AG04450 (cell line): ENCODE measurements at regions of chr11 and their contacts with region 1.

Region 1: GRCh38 chr11:111283945-111284481 is 14.3 kb upstream of the POU2AF3 start:
- DNase-seq: peak; percentile 27
- H3K4me3 ChIP-seq: no peak overlapping the region
- H3K27ac ChIP-seq: no peak overlapping the region
- H3K27me3 ChIP-seq: peaks cover 15% of the 10 kb centered on the region
- CTCF ChIP-seq: no peak

Region 2: GRCh38 chr11:110463153-110463552 is 820.9 kb before region 1 on chr11:
- CTCF ChIA-PET with region 1: interaction called, 11 read pairs
- POLR2A ChIA-PET with region 1: no interaction called
- DNase-seq: peak; percentile 24
- H3K4me3 ChIP-seq: no peak overlapping the region
- H3K27ac ChIP-seq: no peak overlapping the region
- H3K27me3 ChIP-seq: no peaks in the 10 kb centered on the region
- CTCF ChIP-seq: peak; percentile 66

Region 3: GRCh38 chr11:111177037-111177871 is 106.8 kb before region 1 on chr11:
- CTCF ChIA-PET with region 1: no interaction called
- POLR2A ChIA-PET with region 1: no interaction called
- DNase-seq: no peak
- H3K4me3 ChIP-seq: no peak overlapping the region
- H3K27ac ChIP-seq: no peak overlapping the region
- H3K27me3 ChIP-seq: no peaks in the 10 kb centered on the region
- CTCF ChIP-seq: no peak

Region 4: DNA sequence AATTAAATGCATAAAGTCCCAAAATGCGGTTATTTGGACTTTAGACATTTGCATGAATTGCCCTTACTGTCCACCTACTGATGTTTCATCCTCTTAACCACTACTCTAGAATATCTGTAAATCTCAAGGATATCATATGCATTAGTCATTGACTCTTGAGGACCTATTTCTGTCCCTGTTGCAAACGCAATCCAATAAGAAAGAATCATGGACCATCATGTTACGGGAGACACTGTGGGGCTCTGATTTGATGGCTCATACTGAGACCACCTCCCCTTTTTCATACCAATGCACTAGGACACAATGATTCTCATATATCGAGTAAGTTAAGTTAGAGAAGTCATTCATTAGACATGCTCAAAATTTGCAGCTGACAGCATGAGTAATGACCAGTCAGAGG is 24.1 kb before region 1 on chr11:
- CTCF ChIA-PET with region 1: interaction called, 11 read pairs
- POLR2A ChIA-PET with region 1: no interaction called
- DNase-seq: no peak
- H3K4me3 ChIP-seq: no peak overlapping the region
- H3K27ac ChIP-seq: no peak overlapping the region
- H3K27me3 ChIP-seq: peaks cover 9% of the 10 kb centered on the region
- CTCF ChIP-seq: no peak

Region 5: DNA sequence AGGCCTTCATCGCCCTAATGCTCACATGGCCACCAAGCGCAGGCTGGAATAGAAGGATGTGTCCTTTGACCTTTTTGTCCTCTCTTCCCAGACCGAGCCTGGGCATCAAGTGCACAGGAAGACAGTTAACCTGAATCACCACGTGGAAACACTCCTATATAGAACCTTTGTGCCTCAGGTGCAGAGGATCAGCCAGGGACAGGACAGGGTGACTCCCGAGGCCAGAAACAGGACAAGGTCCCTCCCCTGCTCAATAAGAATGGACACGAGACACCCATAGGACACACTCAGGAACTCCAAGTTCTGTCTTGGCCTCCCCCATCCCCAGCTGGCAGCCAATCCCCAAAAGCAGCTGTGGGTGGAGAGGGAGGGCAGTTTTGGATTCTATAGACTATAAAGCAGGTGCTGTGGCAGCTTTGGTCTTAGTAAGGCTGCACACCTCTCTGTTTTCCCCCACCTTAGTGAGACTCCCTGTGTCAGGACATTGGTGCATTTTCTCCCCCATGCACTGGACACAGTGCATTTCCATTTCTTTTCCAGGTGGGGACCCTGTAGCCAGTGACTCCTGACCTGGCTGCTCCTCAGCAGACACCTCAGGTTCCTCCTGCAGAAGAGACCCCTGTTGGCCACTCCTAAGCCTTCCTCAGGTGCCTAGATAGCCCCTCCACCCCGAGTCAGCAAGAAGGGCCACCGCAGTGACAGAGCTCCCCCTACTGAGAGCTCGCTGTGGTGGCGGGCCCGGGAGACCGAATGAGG is 138.7 kb after region 1 on chr11:
- CTCF ChIA-PET with region 1: interaction called, 48 read pairs
- POLR2A ChIA-PET with region 1: no interaction called
- DNase-seq: no peak
- H3K4me3 ChIP-seq: no peak overlapping the region
- H3K27ac ChIP-seq: no peak overlapping the region
- H3K27me3 ChIP-seq: peaks cover 29% of the 10 kb centered on the region
- CTCF ChIP-seq: peak; percentile 83

Region 6: DNA sequence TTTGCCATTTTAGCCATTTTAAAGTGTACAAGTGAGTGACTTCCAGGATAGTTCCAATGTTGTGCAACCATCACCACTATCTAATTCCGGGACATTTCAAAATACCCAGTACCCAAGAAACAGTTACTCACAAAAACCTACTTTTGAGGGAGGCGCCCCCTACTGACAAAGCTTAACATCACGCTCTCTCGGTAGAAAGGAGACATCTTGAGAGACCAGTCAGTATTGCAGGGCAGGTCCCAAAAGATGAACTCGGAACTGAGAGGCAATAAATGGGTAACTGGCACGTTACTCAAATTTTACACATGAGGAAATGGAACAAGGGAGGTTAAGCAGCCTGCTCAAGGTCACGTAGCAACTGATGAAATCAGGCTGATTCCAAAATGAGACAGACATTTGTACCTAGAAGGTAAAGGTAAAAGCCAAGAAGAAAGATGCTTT is 145.1 kb after region 1 on chr11:
- CTCF ChIA-PET with region 1: interaction called, 48 read pairs
- POLR2A ChIA-PET with region 1: no interaction called
- DNase-seq: no peak
- H3K4me3 ChIP-seq: no peak overlapping the region
- H3K27ac ChIP-seq: no peak overlapping the region
- H3K27me3 ChIP-seq: peaks cover 2% of the 10 kb centered on the region
- CTCF ChIP-seq: peak; percentile 66

Region 7: GRCh38 chr11:111446404-111447111 is 162.5 kb after region 1 on chr11:
- CTCF ChIA-PET with region 1: interaction called, 112 read pairs
- POLR2A ChIA-PET with region 1: no interaction called
- DNase-seq: peak; percentile 89
- H3K4me3 ChIP-seq: no peak overlapping the region
- H3K27ac ChIP-seq: no peak overlapping the region
- H3K27me3 ChIP-seq: no peaks in the 10 kb centered on the region
- CTCF ChIP-seq: peak; percentile 95